OCI-LY7 (cell line): ENCODE measurements at regions of chr11 and their contacts with region 1.

Region 1: DNA sequence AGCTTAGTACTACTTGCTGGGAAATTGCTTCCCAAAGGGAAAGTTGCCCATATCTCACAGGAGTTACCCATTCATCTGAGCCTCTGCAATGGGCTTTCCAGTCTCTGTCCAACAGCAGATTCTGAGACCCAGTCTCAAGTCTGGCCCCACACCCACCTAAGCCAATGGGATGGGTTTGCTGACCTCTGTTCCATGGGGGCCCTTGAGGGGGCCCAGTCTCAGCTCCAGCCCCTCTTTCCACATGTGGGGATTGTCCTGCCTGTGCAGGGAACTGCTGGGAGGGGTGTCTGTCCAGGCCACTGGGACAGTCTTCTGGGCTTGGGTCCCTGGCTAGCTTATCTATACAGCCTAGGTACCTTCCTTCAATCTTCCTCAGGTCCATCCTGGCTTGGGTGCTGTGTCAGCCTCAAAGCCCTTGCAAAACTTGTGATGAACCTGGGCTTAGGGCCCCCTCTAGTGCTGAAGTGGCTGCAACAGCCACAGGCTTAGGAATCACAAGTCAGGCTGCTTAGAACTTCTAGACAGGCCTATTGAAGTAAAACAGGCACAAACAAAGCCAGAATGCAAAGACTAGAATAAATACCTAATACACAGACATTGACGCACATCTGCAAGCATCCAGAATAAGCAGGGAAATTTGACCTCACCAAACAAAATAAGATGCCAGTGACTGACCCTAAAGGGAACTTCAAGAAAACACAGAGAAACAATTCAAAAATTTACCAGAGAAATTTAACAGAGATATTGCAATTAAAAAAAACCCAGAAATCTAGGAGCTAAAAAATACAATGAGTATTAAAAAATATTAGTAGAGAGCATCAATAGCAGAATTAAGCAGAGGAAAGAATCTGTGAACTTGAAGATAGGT is 11.7 kb upstream of the PATL1 start:
- DNase-seq: peak; percentile 78
- H3K4me3 ChIP-seq: no peak overlapping the region
- H3K27ac ChIP-seq: no peak overlapping the region
- H3K4me1 ChIP-seq: no peaks in the 10 kb centered on the region
- CTCF ChIP-seq: peak; percentile 92

Region 2: DNA sequence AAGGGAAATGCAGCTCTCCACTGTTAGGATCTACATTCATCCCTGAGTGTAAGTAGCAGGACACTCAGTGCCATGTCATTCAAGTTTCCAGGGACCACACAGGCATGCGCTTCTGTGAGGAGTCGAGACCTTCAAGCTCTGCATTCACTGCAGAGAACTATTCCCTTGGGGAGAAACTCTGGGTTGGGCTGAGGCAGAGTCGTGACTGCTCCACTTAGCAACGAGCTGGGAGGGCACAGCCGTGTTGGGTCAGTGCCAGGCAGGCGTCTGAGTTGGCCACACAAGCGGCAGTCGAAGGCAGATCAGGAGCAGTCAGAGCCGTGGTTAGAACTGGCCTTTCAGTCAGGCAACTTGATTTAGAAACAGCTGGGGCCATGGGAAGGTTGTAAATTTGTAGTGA is 482.5 kb before region 1 on chr11:
- CTCF ChIA-PET with region 1: no interaction called
- POLR2A ChIA-PET with region 1: no interaction called
- intact Hi-C with region 1: no loop called
- DNase-seq: no peak
- H3K4me3 ChIP-seq: no peak overlapping the region
- H3K27ac ChIP-seq: no peak overlapping the region
- H3K4me1 ChIP-seq: peaks cover 5% of the 10 kb centered on the region
- CTCF ChIP-seq: no peak

Region 3: GRCh38 chr11:59542142-59542810 is 138.2 kb before region 1 on chr11:
- CTCF ChIA-PET with region 1: interaction called, 3 read pairs
- POLR2A ChIA-PET with region 1: interaction called, 3 read pairs
- intact Hi-C with region 1: loop called (anchors 1 kb)
- DNase-seq: no peak
- H3K4me3 ChIP-seq: no peak overlapping the region
- H3K27ac ChIP-seq: no peak overlapping the region
- H3K4me1 ChIP-seq: peaks cover 5% of the 10 kb centered on the region
- CTCF ChIP-seq: no peak

Region 4: GRCh38 chr11:59660621-59661020 is 19.9 kb before region 1 on chr11:
- CTCF ChIA-PET with region 1: no interaction called
- POLR2A ChIA-PET with region 1: no interaction called
- intact Hi-C with region 1: no loop called
- DNase-seq: no peak
- H3K4me3 ChIP-seq: no peak overlapping the region
- H3K27ac ChIP-seq: no peak overlapping the region
- H3K4me1 ChIP-seq: peaks cover 10% of the 10 kb centered on the region
- CTCF ChIP-seq: no peak

Region 5: GRCh38 chr11:61406067-61406466 is 1725.5 kb after region 1 on chr11:
- CTCF ChIA-PET with region 1: no interaction called
- POLR2A ChIA-PET with region 1: interaction called, 10 read pairs
- intact Hi-C with region 1: no loop called
- DNase-seq: no peak
- H3K4me3 ChIP-seq: no peak overlapping the region
- H3K27ac ChIP-seq: no peak overlapping the region
- H3K4me1 ChIP-seq: no peaks in the 10 kb centered on the region
- CTCF ChIP-seq: no peak